Posterior cingulate gyrus (tissue), 11 donors: ENCODE measurements at regions of chr15 and their contacts with region 1.

Region 1: DNA sequence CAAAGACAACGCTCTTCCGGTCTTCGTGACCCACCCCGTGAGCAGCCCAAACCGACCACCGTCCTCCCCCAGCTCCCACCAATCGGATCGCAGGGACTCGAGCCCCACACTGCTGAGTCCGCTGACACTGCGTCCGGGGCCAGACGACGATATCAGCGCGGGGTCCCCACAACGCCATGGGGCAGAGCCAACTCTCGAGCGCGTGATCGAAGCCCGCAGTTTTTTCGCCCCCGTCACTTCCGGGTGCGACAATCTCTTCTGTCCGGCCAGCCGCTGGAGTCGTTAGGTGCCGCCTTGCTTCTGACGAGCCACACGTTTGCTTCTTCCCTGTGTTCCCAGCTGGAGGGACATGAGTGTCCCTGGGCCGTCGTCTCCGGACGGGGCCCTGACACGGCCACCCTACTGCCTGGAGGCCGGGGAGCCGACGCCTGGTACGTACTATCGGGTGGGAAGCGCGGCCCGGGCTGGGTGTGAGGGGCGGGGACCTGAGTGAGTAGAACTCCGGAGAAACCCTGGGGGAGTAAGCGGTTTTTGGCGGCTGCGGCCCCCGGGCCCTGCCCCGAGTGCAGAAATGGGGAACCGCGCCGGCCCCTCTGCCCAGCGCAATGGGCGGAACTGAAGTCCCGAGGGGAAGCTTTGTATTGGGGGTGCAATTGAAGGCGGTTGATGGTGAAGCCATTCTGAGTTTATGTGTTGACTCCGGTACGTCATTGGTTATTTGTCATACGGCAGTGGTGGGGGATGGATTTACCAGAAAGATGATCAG is at the start of gene BLOC1S6:
- DNase-seq: peak; percentile 84 to 98 (median 92)

Region 2: GRCh38 chr15:44798826-44799225 is 788.5 kb before region 1 on chr15:
- intact Hi-C with region 1: no loop called
- DNase-seq: no peak

Region 3: GRCh38 chr15:45522328-45523160 is 64.7 kb before region 1 on chr15 and contains the start of gene SLC30A4:
- intact Hi-C with region 1: loop called (anchors 2 kb)
- DNase-seq: peak; percentile 53 to 95 (median 65)

Region 4: DNA sequence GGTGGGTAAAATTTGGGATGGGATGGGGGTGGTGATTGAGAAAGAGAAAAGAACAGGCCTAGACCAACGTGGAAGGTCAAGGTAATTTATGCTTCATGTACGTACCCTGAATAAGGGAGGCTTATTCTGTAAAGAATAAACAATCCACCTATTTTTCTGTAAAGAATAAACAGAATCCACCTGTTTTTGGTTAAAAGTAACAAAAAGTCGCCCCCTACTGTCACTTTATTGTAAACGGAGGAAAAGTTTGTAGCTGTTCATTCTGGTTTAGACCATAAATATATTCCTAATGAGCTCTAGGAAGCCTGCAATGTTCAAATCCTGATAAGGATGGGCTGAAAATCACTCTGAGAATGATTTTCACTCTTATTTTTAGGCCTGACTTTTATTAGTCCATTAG is 24.0 kb after region 1 on chr15:
- intact Hi-C with region 1: no loop called
- DNase-seq: no peak